Heart left ventricle (tissue), 16 donors: ENCODE measurements at regions of chr12 and their contacts with region 1.

Region 1: DNA sequence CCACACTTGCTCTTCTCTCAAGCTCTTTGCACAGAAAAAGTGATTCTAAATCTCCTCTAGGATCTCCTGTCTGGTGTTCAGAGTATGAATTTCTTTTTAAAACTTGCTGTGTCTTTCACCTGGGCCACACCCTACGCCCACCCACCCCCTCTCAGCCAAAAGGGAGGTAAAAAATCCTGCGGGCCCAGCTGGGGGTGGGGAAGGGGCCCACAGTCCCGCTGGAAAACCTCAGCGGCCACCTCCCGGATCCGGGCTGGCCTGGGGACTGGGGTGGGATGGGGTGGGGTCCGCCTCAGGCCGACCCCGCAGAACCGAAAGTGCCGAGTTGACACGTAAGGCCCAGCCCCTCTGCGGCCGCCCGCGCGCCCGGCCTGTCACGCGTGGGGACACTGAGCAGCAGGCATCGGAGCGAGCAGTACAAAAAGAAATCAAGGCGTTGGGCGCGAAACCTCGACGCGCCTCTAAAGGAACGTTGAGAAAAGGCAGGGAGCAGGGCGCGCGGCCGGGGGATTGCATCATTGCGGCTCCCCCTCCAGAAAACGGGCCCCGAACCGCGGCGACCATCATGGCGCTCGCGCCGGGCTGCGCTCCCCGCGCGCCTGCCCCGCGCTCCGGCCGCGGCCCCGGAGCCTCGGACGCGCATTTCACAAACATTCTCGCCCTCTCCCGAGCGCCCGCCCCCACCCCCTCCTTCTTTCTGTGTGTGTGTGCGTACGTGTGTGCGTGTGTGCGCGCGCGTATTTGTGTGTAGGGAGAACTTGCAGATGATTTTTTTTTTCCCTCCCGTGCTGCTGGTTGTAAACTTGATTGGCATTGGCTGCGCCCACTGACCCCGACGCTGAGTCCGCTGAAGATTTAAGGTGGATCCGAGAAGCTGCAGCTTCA is 7.7 kb downstream of the CDKN1B start:
- DNase-seq: peak; percentile 93 to 97 (median 94)
- ATAC-seq: peak; percentile 79 to 87 (median 84)
- H3K4me3 ChIP-seq: peak overlapping the region; percentile 43 to 84 (median 78)
- H3K27ac ChIP-seq: peak overlapping the region; percentile 90 to 100 (median 98)
- H3K4me1 ChIP-seq: peaks cover 0 to 54% (median 35%) of the 10 kb centered on the region in 12 donors
- H3K27me3 ChIP-seq: no peaks in the 10 kb centered on the region
- CTCF ChIP-seq: no peak
- POLR2A ChIP-seq: peak in 1 of 2 donors; percentile 89

Region 2: GRCh38 chr12:12696562-12697383 is 28.1 kb before region 1 on chr12:
- intact Hi-C with region 1: loop called in 1 of 10 experiments (anchors 1 kb)
- DNase-seq: peak; percentile 91 to 95 (median 93)
- ATAC-seq: peak; percentile 87 to 95 (median 92)
- H3K4me3 ChIP-seq: peak overlapping the region; percentile 15 to 73 (median 64)
- H3K27ac ChIP-seq: peak overlapping the region; percentile 90 to 99 (median 96)
- H3K4me1 ChIP-seq: peaks cover 0 to 23% (median 5%) of the 10 kb centered on the region in 12 donors
- H3K27me3 ChIP-seq: no peaks in the 10 kb centered on the region
- CTCF ChIP-seq: peak in 1 of 12 donors; percentile 16
- POLR2A ChIP-seq: peak in 1 of 2 donors; percentile 73